Cardiac septum (tissue), 1 donor: ENCODE measurements at regions of chr5 and their contacts with region 1.

Region 1: GRCh38 chr5:15234366-15234765 is 265.6 kb upstream of the FBXL7 start:
- DNase-seq: no peak

Region 2: DNA sequence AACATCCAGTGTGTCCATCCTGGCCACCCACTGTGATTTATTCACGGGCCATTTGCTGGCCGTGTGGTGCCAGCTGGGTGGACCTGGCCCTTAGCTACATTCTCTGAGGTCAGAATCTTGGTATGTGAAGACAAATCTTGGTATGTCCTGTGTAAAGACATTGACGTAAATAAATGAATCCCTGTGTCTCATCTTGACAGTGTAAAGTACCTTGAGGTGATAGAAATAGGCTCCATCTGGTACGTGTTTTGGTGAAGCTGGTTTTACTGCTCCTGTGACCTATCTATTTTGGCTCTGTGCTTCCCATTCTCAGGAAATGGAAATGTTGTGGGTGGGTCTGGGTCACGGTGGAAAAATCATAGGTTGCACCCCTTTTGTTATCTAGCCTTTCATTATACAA is 117.4 kb before region 1 on chr5:
- intact Hi-C with region 1: loop called (anchors 5 kb)
- DNase-seq: no peak

Region 3: GRCh38 chr5:15585841-15586591 is 351.6 kb after region 1 on chr5:
- intact Hi-C with region 1: no loop called
- DNase-seq: no peak